K562 (cell line): ENCODE measurements at regions of chr11 and their contacts with region 1.

Region 1: GRCh38 chr11:85595285-85595884 is 31.8 kb downstream of the DLG2 start:
- DNase-seq: peak; percentile 30 to 62 (median 40)
- ATAC-seq: peak; percentile 86
- H3K4me3 ChIP-seq: no peak overlapping the region
- H3K27ac ChIP-seq: no peak overlapping the region
- H3K4me1 ChIP-seq: no peaks in the 10 kb centered on the region; a peak in 2 of 5 replicates
- H3K27me3 ChIP-seq: no peaks in the 10 kb centered on the region
- CTCF ChIP-seq: peak; percentile 39 to 83 (median 44); a peak in 4 of 6 replicates
- EP300 ChIP-seq: no peak
- POLR2A ChIP-seq: no peak
- RAD21 ChIP-seq: peak; percentile 91 to 95

Region 2: DNA sequence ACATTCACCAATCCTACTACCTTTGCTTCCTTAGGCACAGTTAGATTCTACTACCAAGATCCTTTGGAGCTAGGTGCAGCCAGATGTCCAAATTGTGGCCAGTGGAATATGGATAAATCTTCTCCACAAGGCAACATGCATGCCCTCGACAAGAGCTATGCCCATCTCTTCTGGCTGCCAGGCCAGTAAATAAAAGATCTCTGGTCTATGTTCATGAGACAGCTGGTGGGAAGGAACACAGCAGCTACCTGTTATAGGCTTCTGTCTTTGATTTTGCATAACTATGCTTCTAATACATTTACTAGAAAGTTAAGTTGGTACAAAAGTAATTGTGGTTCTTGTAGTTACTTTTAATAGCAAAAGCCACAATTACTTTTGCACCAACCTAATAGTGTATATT is 150.9 kb before region 1 on chr11:
- CTCF ChIA-PET with region 1: no interaction called
- POLR2A ChIA-PET with region 1: no interaction called
- in situ Hi-C with region 1: no loop called
- intact Hi-C with region 1: no loop called
- DNase-seq: no peak
- ATAC-seq: no peak
- H3K4me3 ChIP-seq: no peak overlapping the region
- H3K27ac ChIP-seq: no peak overlapping the region
- H3K4me1 ChIP-seq: no peaks in the 10 kb centered on the region
- H3K27me3 ChIP-seq: no peaks in the 10 kb centered on the region
- CTCF ChIP-seq: no peak
- EP300 ChIP-seq: no peak
- POLR2A ChIP-seq: no peak
- RAD21 ChIP-seq: no peak

Region 3: GRCh38 chr11:85551881-85552280 is 43.5 kb before region 1 on chr11:
- CTCF ChIA-PET with region 1: no interaction called
- POLR2A ChIA-PET with region 1: no interaction called
- in situ Hi-C with region 1: no loop called
- intact Hi-C with region 1: no loop called
- DNase-seq: no peak
- ATAC-seq: no peak
- H3K4me3 ChIP-seq: no peak overlapping the region
- H3K27ac ChIP-seq: no peak overlapping the region
- H3K4me1 ChIP-seq: no peaks in the 10 kb centered on the region
- H3K27me3 ChIP-seq: no peaks in the 10 kb centered on the region
- CTCF ChIP-seq: no peak
- EP300 ChIP-seq: no peak
- POLR2A ChIP-seq: no peak
- RAD21 ChIP-seq: no peak

Region 4: DNA sequence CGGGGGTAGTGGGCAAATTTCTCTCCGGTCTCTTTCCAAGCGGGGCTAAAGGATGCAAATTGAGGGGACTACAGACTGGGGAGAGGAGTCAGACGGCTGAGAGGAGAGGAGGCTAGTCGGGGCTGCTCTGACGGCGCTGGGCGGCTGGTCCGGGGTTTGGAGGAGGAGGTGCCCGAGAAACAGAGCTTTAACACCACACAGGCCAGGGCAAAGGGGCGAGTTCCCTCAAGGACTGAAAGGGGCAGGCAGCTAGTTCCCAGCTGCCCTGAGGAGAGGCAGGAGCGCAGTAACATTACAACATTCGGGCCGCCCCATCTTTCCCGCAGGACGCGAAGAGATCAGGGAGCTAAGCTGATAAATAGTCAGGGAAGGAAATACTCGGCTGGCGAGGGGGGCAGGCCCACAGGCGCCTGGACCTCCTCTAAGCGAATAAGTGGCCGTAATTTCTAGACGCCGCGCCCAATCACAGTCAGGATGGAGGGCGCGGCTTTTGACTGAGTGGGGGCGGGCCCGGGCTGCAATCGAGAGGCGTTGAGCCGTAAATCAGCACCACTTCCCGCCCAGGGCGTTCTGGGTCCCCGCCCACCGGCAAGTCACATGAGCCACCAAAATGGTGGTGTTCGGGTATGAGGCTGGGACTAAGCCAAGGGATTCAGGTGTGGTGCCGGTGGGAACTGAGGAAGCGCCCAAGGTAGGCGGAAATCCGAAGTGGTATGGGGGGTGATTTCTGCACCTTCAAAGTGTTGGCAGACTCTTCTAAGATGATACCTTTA is 32.8 kb after region 1 on chr11 and contains the start of gene TMEM126B:
- CTCF ChIA-PET with region 1: no interaction called
- POLR2A ChIA-PET with region 1: no interaction called
- in situ Hi-C with region 1: no loop called
- intact Hi-C with region 1: no loop called
- DNase-seq: peak; percentile 89 to 98 (median 91)
- ATAC-seq: peak; percentile 99
- H3K4me3 ChIP-seq: peak within 1 kb of the TSS; percentile 70
- H3K27ac ChIP-seq: peak within 1 kb of the TSS; percentile 90
- H3K4me1 ChIP-seq: peaks cover 5 to 6% of the 10 kb centered on the region in 2 experiments; a peak in 3 of 5 replicates
- H3K27me3 ChIP-seq: no peaks in the 10 kb centered on the region
- CTCF ChIP-seq: no peak
- EP300 ChIP-seq: peak; percentile 49; the same call in 1 of the 2 replicates
- POLR2A ChIP-seq: peak; percentile 90
- RAD21 ChIP-seq: no peak
- polyA plus RNA-seq, gene TMEM126B: 209 to 226 TPM

Region 5: GRCh38 chr11:85664615-85665481 is 69.5 kb after region 1 on chr11 and contains the start of gene CREBZF:
- CTCF ChIA-PET with region 1: interaction called, 4 read pairs
- POLR2A ChIA-PET with region 1: no interaction called
- in situ Hi-C with region 1: no loop called
- intact Hi-C with region 1: loop called (anchors 5 kb)
- DNase-seq: peak; percentile 90 to 98 (median 92)
- ATAC-seq: peak; percentile 88
- H3K4me3 ChIP-seq: peak within 1 kb of the TSS; percentile 94
- H3K27ac ChIP-seq: peak within 1 kb of the TSS; percentile 98
- H3K4me1 ChIP-seq: peaks cover 5 to 14% of the 10 kb centered on the region in 2 experiments; a peak in 3 of 5 replicates
- H3K27me3 ChIP-seq: no peaks in the 10 kb centered on the region
- CTCF ChIP-seq: no peak; a peak in 1 of 6 replicates
- EP300 ChIP-seq: no peak
- POLR2A ChIP-seq: peak; percentile 93
- RAD21 ChIP-seq: no peak
- polyA plus RNA-seq, gene CREBZF: 7.2 to 7.4 TPM

Region 6: DNA sequence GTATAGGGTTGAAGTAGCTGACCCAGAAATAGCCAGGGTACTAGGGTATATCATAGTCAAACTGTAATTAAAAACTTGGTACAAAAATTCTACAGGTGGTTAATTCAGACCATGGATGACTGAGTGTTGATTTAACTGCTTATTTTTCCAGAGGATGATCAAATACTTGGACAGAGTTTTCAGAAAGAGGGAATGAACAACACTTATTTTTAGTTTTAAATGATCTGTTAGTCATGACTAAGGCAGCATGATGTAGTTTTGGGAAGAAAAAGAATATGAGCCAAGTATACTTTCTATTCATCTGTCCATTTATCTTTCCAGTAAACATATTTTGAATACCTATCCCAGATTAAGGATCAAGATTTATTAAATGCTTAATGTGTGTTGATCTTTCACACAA is 110.4 kb after region 1 on chr11:
- CTCF ChIA-PET with region 1: no interaction called
- POLR2A ChIA-PET with region 1: no interaction called
- in situ Hi-C with region 1: no loop called
- intact Hi-C with region 1: no loop called
- DNase-seq: no peak
- ATAC-seq: no peak
- H3K4me3 ChIP-seq: no peak overlapping the region
- H3K27ac ChIP-seq: no peak overlapping the region
- H3K4me1 ChIP-seq: no peaks in the 10 kb centered on the region
- H3K27me3 ChIP-seq: peaks cover 4% of the 10 kb centered on the region in 2 experiments; a peak in 2 of 5 replicates
- CTCF ChIP-seq: no peak
- EP300 ChIP-seq: no peak
- POLR2A ChIP-seq: no peak
- RAD21 ChIP-seq: no peak

Region 7: GRCh38 chr11:85854557-85855340 is 259.4 kb after region 1 on chr11:
- CTCF ChIA-PET with region 1: no interaction called
- POLR2A ChIA-PET with region 1: no interaction called
- in situ Hi-C with region 1: no loop called
- intact Hi-C with region 1: loop called (anchors 2 kb)
- DNase-seq: peak; percentile 90 to 94 (median 92)
- ATAC-seq: peak; percentile 99
- H3K4me3 ChIP-seq: peak overlapping the region; percentile 33
- H3K27ac ChIP-seq: peak overlapping the region; percentile 56
- H3K4me1 ChIP-seq: peaks cover 4 to 11% of the 10 kb centered on the region in 2 experiments; a peak in 2 of 5 replicates
- H3K27me3 ChIP-seq: no peaks in the 10 kb centered on the region
- CTCF ChIP-seq: peak; percentile 85 to 93 (median 88)
- EP300 ChIP-seq: no peak
- POLR2A ChIP-seq: peak; percentile 76
- RAD21 ChIP-seq: peak; percentile 91 to 97

Region 8: GRCh38 chr11:86291466-86292262 is 696.3 kb after region 1 on chr11:
- CTCF ChIA-PET with region 1: interaction called, 7 read pairs
- POLR2A ChIA-PET with region 1: no interaction called
- in situ Hi-C with region 1: loop called (anchors 10 kb)
- intact Hi-C with region 1: loop called (anchors 5 kb)
- DNase-seq: peak; percentile 57 to 76 (median 64)
- ATAC-seq: peak; percentile 80
- H3K4me3 ChIP-seq: no peak overlapping the region
- H3K27ac ChIP-seq: no peak overlapping the region
- H3K4me1 ChIP-seq: no peaks in the 10 kb centered on the region; a peak in 1 of 5 replicates
- H3K27me3 ChIP-seq: no peaks in the 10 kb centered on the region
- CTCF ChIP-seq: peak; percentile 70 to 88 (median 84)
- EP300 ChIP-seq: no peak
- POLR2A ChIP-seq: no peak
- RAD21 ChIP-seq: peak; percentile 78 to 83